Astrocyte of the cerebellum (primary cell): ENCODE measurements at regions of chr3 and their contacts with region 1.

Region 1: GRCh38 chr3:126208618-126209256 is 28.4 kb upstream of the ALDH1L1 start:
- DNase-seq: peak; percentile 65
- H3K4me3 ChIP-seq: no peak overlapping the region
- CTCF ChIP-seq: no peak

Region 2: GRCh38 chr3:126083913-126084767 is 124.6 kb before region 1 on chr3 and contains the start of gene SLC41A3:
- in situ Hi-C with region 1: no loop called
- DNase-seq: peak; percentile 29
- H3K4me3 ChIP-seq: peak within 1 kb of the TSS; percentile 60
- CTCF ChIP-seq: peak; percentile 52

Region 3: DNA sequence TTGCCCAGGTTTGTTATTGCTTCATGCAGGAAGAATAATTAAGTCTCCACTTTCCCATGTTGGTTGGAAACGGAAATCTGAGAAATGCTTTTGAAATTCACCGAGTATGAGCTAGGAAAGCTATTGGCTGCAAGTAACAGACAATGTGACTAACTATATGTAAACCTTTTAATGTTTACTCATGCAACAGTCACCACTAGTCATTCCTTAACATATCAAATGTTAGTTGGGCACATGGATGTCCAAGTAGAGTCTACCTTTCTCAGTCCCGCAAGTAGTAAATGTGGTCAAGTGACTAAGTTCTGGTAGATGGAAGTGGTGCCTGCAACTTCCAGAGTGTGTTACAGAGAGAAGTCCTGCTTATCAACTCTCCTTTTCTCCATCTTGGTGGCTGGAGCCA is 96.0 kb after region 1 on chr3:
- in situ Hi-C with region 1: no loop called
- DNase-seq: no peak
- H3K4me3 ChIP-seq: no peak overlapping the region
- CTCF ChIP-seq: no peak

Region 4: GRCh38 chr3:126314790-126315658 is 106.3 kb after region 1 on chr3:
- in situ Hi-C with region 1: loop called (anchors 5 kb)
- DNase-seq: no peak
- H3K4me3 ChIP-seq: no peak overlapping the region
- CTCF ChIP-seq: no peak